ENCODE measurements at regions of chr14 and their contacts with region 1.

Region 1: GRCh38 chr14:69611201-69612011 is at the start of gene SUSD6:
- DNase-seq: peak; percentile 85 to 91 (median 87)
- H3K4me3 ChIP-seq: peak within 1 kb of the TSS; percentile 80 to 84
- H3K4me3 Mint-ChIP-seq: peak within 1 kb of the TSS; percentile 91 to 99 (median 97)
- H3K27ac ChIP-seq: peak within 1 kb of the TSS; percentile 83
- H3K27ac Mint-ChIP-seq: peak within 1 kb of the TSS; percentile 96 to 100 (median 100)
- H3K4me1 ChIP-seq: peaks cover 56% of the 10 kb centered on the region
- H3K4me1 Mint-ChIP-seq: peaks cover 40 to 64% (median 53%) of the 10 kb centered on the region in 4 donors
- H3K27me3 ChIP-seq: no peaks in the 10 kb centered on the region
- H3K27me3 Mint-ChIP-seq: no peaks in the 10 kb centered on the region
- total RNA-seq, gene SUSD6: 61.5 to 62.0 TPM

Region 2: DNA sequence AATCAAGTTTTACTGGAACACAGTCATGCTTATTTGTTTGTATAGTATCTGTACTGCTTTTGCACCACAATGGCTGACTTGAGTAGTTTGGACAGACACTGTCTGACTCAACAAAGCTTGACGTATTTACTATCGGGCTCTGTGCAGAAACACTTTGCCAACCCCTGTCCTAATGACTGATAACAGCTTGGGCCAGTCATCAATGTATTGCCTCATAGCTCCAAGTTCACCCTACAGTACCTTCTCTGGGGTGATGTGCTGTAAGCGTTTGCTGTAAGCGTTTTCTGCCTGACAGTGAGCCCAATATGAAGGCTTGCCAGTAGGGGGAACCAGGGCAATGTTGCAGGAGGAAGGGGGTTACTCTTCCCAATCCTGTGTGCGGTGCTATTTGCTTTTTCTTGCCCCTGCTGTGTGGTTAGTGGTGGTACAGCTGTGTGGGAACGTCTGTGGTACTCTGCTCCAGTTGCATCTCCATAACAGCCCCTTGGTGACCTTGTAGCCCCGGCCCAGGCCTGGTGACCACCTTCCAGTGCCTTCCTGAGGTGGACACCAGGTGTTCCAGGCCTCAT is 31.3 kb before region 1 on chr14:
- CTCF ChIA-PET with region 1: interaction called, 5 read pairs
- POLR2A ChIA-PET with region 1: no interaction called
- intact Hi-C with region 1: loop called (anchors 2 kb)
- DNase-seq: no peak
- H3K4me3 ChIP-seq: no peak overlapping the region
- H3K4me3 Mint-ChIP-seq: no peak overlapping the region
- H3K27ac ChIP-seq: no peak overlapping the region
- H3K27ac Mint-ChIP-seq: peak overlapping the region in 1 of 7 donors; percentile 66
- H3K4me1 ChIP-seq: no peaks in the 10 kb centered on the region
- H3K4me1 Mint-ChIP-seq: peaks cover 0 to 2% (median 0%) of the 10 kb centered on the region in 4 donors
- H3K27me3 ChIP-seq: no peaks in the 10 kb centered on the region
- H3K27me3 Mint-ChIP-seq: peaks cover 12 to 13% of the 10 kb centered on the region in 2 donors

Region 3: DNA sequence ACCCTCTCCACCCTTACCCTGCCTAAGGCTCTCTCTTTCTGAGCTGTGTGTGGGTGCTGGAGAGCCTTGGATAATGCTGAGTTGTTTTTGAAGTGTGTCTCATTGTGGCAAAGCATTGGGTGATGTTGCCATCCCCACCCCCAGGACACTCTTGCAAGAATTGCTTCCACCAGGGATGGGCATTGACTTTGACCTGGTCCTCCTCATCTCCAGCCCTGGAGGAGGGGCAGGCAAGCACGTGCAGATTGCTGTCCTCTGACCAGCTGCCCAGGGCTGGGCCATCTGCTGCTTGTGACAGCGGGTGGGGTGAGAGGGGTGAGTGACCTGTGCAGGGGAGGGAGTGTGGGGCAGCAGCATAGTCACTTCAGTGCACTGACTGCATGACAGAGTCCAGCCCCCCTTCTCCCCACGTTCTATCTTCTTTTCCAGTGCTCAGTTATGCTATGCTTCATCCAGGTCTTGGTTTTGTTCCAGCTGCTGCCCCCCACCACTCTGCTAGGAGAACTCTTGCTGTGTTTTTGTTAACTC is 26.2 kb after region 1 on chr14:
- CTCF ChIA-PET with region 1: interaction called, 7 read pairs
- POLR2A ChIA-PET with region 1: interaction called, 279 read pairs
- intact Hi-C with region 1: loop called (anchors 1 kb)
- DNase-seq: no peak
- H3K4me3 ChIP-seq: no peak overlapping the region
- H3K4me3 Mint-ChIP-seq: peak overlapping the region in 7 of 8 donors; percentile 68 to 88 (median 78)
- H3K27ac ChIP-seq: peak overlapping the region; percentile 47
- H3K27ac Mint-ChIP-seq: peak overlapping the region; percentile 85 to 97 (median 92)
- H3K4me1 ChIP-seq: peaks cover 75% of the 10 kb centered on the region
- H3K4me1 Mint-ChIP-seq: peaks cover 67 to 89% (median 79%) of the 10 kb centered on the region in 4 donors
- H3K27me3 ChIP-seq: no peaks in the 10 kb centered on the region
- H3K27me3 Mint-ChIP-seq: no peaks in the 10 kb centered on the region

Region 4: DNA sequence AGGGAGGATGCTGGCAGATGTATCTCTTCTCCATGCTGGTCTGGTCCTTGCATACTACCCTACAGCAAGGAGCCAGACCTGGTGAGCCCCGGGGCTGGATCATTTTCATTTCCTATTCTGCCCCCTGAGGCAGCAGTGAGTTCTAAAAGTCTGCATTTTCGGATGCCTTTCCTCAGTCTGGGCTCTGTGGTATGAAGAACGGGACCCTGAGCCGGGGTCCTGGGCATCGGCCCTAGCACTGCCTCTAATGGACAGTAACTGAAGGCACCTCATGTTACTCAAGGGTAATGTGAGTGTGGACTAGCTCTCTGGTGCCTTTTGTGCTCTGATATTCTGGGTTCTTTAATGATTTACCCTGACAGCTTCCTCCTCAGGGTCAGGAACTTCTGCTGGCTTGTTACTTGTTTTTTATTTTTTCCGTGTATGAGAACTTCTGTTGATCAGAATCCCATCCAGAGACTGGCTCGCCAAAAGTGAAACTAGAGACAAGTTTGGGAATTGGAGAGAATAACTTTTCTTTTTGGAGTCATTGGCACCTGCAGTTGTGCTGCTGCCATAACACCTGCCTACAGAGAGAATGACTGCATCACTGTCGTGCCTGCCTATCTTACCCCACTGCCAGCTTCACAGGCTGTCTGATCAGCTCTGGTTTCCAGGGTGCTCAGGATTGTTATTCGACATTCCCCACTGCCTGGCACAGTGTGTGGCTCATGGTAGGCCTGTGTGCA is 62.3 kb after region 1 on chr14:
- CTCF ChIA-PET with region 1: interaction called, 12 read pairs
- POLR2A ChIA-PET with region 1: interaction called, 99 read pairs
- intact Hi-C with region 1: loop called (anchors 2 kb)
- DNase-seq: no peak
- H3K4me3 ChIP-seq: peak overlapping the region; percentile 4 to 11
- H3K4me3 Mint-ChIP-seq: peak overlapping the region; percentile 58 to 83 (median 70)
- H3K27ac ChIP-seq: peak overlapping the region; percentile 32
- H3K27ac Mint-ChIP-seq: peak overlapping the region; percentile 56 to 95 (median 83)
- H3K4me1 ChIP-seq: peaks cover 83% of the 10 kb centered on the region
- H3K4me1 Mint-ChIP-seq: peaks cover 74 to 84% (median 78%) of the 10 kb centered on the region in 4 donors
- H3K27me3 ChIP-seq: no peaks in the 10 kb centered on the region
- H3K27me3 Mint-ChIP-seq: no peaks in the 10 kb centered on the region

Region 5: GRCh38 chr14:69708586-69709174 is 97.3 kb after region 1 on chr14:
- CTCF ChIA-PET with region 1: interaction called, 30 read pairs
- POLR2A ChIA-PET with region 1: interaction called, 4 read pairs
- intact Hi-C with region 1: no loop called
- DNase-seq: peak in 3 of 5 donors; percentile 24 to 41 (median 28)
- H3K4me3 ChIP-seq: no peak overlapping the region
- H3K4me3 Mint-ChIP-seq: no peak overlapping the region
- H3K27ac ChIP-seq: no peak overlapping the region
- H3K27ac Mint-ChIP-seq: peak overlapping the region in 4 of 7 donors; percentile 35 to 87 (median 54)
- H3K4me1 ChIP-seq: peaks cover 17% of the 10 kb centered on the region
- H3K4me1 Mint-ChIP-seq: peaks cover 25 to 58% (median 31%) of the 10 kb centered on the region in 4 donors
- H3K27me3 ChIP-seq: no peaks in the 10 kb centered on the region
- H3K27me3 Mint-ChIP-seq: no peaks in the 10 kb centered on the region

Region 6: DNA sequence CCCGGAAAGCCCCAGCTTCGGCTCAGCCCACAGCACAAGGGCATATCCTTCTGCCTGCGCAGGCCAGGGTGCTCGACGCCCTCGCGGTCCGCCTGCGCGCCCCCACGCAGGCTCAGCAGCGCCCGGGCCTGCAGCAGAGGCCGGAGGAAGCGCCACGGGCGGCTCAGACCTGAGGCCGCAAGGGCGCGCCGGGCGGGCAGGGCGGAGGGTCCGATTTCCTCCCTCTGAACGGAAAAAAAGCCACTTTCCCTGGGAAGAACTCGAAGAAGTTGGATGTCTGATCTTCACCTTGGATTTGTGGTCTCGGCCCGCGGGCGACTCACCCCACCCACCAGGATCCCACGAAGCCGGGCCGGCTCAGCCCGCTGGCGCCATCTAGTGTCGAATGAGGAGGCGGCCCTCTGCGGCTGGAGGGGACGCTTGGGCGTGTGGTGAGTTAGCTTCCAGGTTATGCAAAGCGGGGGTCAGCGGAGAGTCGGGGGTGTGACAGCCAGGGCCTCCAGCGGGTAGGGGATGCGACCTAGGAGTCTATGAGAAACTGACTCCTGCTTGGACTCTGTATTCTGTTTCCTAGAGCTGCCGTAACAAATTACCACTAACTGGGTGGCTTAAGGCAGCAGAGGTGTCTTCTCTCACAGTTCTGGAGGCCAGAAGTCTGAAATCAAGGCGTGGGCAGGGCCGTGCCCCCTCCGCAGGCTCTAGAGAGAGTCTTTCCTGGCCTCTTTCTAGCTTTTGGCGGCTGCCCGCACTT is 115.5 kb after region 1 on chr14:
- CTCF ChIA-PET with region 1: interaction called, 152 read pairs
- POLR2A ChIA-PET with region 1: interaction called, 6 read pairs
- intact Hi-C with region 1: no loop called
- DNase-seq: peak; percentile 71 to 84 (median 79)
- H3K4me3 ChIP-seq: peak overlapping the region; percentile 29 to 54
- H3K4me3 Mint-ChIP-seq: peak overlapping the region; percentile 65 to 82 (median 74)
- H3K27ac ChIP-seq: peak overlapping the region; percentile 30
- H3K27ac Mint-ChIP-seq: peak overlapping the region; percentile 62 to 86 (median 71)
- H3K4me1 ChIP-seq: peaks cover 19% of the 10 kb centered on the region
- H3K4me1 Mint-ChIP-seq: peaks cover 11 to 39% (median 25%) of the 10 kb centered on the region in 4 donors
- H3K27me3 ChIP-seq: no peaks in the 10 kb centered on the region
- H3K27me3 Mint-ChIP-seq: no peaks in the 10 kb centered on the region

Region 7: DNA sequence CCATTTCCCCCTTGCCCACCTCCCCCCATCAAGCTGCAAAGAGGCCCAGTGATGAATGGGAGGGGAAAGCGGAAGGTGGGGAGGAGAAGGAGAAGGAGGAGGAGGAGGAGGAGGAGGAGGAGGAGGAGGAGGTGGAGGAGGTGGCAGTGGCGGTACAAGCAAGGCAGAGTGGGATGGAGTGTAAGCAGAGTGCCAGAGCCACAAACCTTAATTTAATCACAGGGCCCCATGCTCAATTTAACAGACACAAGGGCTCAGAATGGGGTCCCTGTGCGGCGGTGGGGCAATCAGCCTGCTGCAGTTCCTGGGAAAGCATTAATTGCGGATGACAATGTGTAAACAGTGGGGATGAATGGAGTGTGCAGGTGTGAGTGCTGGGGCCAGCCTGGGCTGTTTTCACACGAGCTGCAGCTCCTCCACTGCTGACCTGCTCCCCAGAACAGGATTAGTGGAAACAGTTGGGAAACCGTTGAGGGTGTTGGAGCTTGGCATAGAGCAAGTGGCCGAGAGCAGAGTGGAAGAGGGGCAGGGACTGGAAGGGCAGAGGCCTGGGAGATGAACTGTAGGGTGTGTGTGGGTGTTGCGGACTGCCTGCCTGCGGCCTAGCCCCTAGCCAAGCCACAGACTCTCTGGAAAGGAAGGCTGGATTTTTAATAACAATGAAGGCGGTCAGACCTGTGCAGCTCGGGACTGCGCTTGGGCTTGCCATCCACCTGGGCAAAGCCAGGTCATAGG is 231.4 kb after region 1 on chr14:
- CTCF ChIA-PET with region 1: no interaction called
- POLR2A ChIA-PET with region 1: no interaction called
- intact Hi-C with region 1: no loop called
- DNase-seq: no peak
- H3K4me3 ChIP-seq: no peak overlapping the region
- H3K4me3 Mint-ChIP-seq: no peak overlapping the region
- H3K27ac ChIP-seq: no peak overlapping the region
- H3K27ac Mint-ChIP-seq: no peak overlapping the region
- H3K4me1 ChIP-seq: no peaks in the 10 kb centered on the region
- H3K4me1 Mint-ChIP-seq: no peaks in the 10 kb centered on the region
- H3K27me3 ChIP-seq: peaks cover 4% of the 10 kb centered on the region
- H3K27me3 Mint-ChIP-seq: peaks cover 5 to 12% of the 10 kb centered on the region in 2 donors

Measured in CD4-positive, alpha-beta memory T cell (primary cell).